Right cardiac atrium (tissue), 5 donors: ENCODE measurements at regions of chr12 and their contacts with region 1.

Region 1: DNA sequence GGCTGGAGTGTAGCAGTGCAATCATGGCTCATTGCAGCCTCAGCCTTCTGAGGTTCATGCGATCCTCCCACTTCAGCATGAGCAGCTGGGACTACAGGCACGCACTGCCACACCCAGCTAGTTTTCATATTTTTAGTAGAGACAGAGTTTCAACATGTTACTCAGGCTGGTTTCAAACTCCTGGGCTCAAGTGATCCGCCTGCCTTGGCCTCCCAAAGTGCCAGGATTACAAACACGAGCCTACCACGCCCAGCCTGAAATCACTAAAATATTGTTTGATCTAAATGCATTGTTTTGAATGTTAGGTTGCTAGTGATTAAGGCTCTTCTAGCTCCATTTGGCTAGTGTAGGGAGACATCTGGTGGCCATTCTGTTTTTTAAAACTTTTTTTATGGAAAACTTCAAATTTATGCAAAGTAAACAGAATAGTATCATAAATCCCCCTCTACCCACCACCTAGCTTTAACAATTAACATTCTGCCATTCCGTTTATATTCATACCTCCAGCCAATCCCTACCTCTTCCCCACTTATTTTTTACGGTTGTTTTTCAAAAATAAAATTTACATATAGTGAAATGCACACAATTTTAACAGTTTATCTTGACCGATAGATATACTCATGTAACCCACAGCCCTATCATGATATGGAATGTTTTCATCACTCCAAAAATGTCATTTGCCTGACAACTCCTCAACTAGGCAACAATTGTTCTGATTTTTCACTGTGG is 37.8 kb downstream of the MYO1H start:
- DNase-seq: peak in 2 of 3 donors; percentile 30 to 58
- ATAC-seq: peak; percentile 75 to 80
- H3K4me3 ChIP-seq: no peak overlapping the region
- H3K27ac ChIP-seq: no peak overlapping the region
- H3K4me1 ChIP-seq: no peaks in the 10 kb centered on the region
- H3K27me3 ChIP-seq: no peaks in the 10 kb centered on the region

Region 2: DNA sequence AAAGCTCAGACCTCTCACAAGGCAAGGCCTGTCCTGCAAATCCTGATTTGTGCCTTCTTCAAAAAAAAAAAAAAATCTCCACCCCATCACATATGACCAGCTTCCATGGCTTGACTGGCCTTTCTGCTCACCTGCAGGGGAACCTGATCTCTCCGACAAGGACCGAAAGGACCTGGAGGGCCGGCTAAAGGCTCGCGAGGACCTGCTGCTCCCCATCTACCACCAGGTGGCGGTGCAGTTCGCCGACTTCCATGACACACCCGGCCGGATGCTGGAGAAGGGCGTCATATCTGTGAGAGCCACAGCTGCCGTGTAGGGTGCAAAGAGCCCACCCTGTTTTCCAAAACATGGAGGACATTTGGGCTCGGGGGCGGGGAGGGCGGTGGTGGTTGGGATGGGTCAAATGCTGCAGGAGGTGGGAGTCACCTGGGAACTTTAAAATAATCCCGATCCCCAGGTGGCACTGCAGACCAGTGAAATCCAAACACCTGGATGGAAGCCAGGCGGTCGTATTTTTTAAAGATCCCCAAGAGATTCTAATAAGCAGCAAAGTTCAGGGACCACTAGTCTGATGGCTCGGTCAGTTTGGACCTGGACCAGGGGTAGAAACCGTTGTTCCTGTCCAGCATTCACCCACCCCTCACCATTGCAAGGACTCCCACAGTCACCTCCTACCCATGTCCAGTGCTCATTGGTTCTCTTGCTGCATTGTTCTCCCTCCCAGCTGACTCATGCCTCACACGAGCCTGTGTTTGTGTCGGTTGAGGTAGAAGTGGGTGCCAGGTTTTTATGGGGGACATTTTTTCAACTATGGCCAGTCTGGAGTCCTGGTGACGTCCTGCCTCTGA is 121.2 kb before region 1 on chr12:
- intact Hi-C with region 1: loop called (anchors 2 to 10 kb)
- DNase-seq: peak; percentile 78 to 89 (median 89)
- ATAC-seq: peak; percentile 67 to 72
- H3K4me3 ChIP-seq: no peak overlapping the region
- H3K27ac ChIP-seq: no peak overlapping the region
- H3K4me1 ChIP-seq: peaks cover 3% of the 10 kb centered on the region
- H3K27me3 ChIP-seq: no peaks in the 10 kb centered on the region

Region 3: GRCh38 chr12:109544955-109545531 is 159.5 kb after region 1 on chr12:
- intact Hi-C with region 1: no loop called
- DNase-seq: peak in 1 of 3 donors; percentile 68
- ATAC-seq: peak; percentile 55 to 73
- H3K4me3 ChIP-seq: no peak overlapping the region
- H3K27ac ChIP-seq: no peak overlapping the region
- H3K4me1 ChIP-seq: peaks cover 7% of the 10 kb centered on the region
- H3K27me3 ChIP-seq: no peaks in the 10 kb centered on the region